HEK293 (cell line): ENCODE measurements at regions of chr12 and their contacts with region 1.

Region 1: GRCh38 chr12:14618983-14619382 is 51.3 kb upstream of the PLBD1 start:
- H3K4me3 ChIP-seq: no peak overlapping the region
- H3K27ac ChIP-seq: no peak overlapping the region
- H3K4me1 ChIP-seq: no peaks in the 10 kb centered on the region
- CTCF ChIP-seq: no peak

Region 2: GRCh38 chr12:14514154-14514842 is 104.7 kb before region 1 on chr12:
- CTCF ChIA-PET with region 1: interaction called, 27 read pairs
- POLR2A ChIA-PET with region 1: no interaction called
- H3K4me3 ChIP-seq: no peak overlapping the region
- H3K27ac ChIP-seq: no peak overlapping the region
- H3K4me1 ChIP-seq: no peaks in the 10 kb centered on the region
- CTCF ChIP-seq: no peak

Region 3: GRCh38 chr12:14601692-14602478 is 17.1 kb before region 1 on chr12:
- CTCF ChIA-PET with region 1: no interaction called
- POLR2A ChIA-PET with region 1: no interaction called
- H3K4me3 ChIP-seq: no peak overlapping the region
- H3K27ac ChIP-seq: no peak overlapping the region
- H3K4me1 ChIP-seq: no peaks in the 10 kb centered on the region
- CTCF ChIP-seq: no peak